ENCODE measurements at regions of chr20 and their contacts with region 1.

Region 1: GRCh38 chr20:36481381-36482043 is 59.8 kb upstream of the MYL9 start:
- DNase-seq: no peak
- ATAC-seq: no peak
- H3K4me3 ChIP-seq: no peak overlapping the region
- H3K27ac ChIP-seq: no peak overlapping the region
- H3K4me1 ChIP-seq: peaks cover 12% of the 10 kb centered on the region
- H3K27me3 ChIP-seq: no peaks in the 10 kb centered on the region
- CTCF ChIP-seq: no peak
- EP300 ChIP-seq: no peak
- POLR2A ChIP-seq: no peak
- RAD21 ChIP-seq: no peak

Region 2: GRCh38 chr20:36493013-36493800 is 11.7 kb after region 1 on chr20:
- CTCF ChIA-PET with region 1: interaction called, 10 read pairs
- POLR2A ChIA-PET with region 1: interaction called, 6 read pairs
- RAD21 ChIA-PET with region 1: no interaction called
- SMC1A ChIA-PET with region 1: interaction called, 4 read pairs
- in situ Hi-C with region 1: no loop called
- intact Hi-C with region 1: no loop called
- DNase-seq: no peak
- ATAC-seq: peak; percentile 42
- H3K4me3 ChIP-seq: no peak overlapping the region
- H3K27ac ChIP-seq: peak overlapping the region; percentile 59; the same call in 1 of the 2 replicates
- H3K4me1 ChIP-seq: peaks cover 21% of the 10 kb centered on the region
- H3K27me3 ChIP-seq: no peaks in the 10 kb centered on the region
- CTCF ChIP-seq: peak; percentile 21 to 51 (median 48); a peak in 4 of 6 replicates
- EP300 ChIP-seq: no peak
- POLR2A ChIP-seq: no peak
- RAD21 ChIP-seq: peak; percentile 52

Region 3: DNA sequence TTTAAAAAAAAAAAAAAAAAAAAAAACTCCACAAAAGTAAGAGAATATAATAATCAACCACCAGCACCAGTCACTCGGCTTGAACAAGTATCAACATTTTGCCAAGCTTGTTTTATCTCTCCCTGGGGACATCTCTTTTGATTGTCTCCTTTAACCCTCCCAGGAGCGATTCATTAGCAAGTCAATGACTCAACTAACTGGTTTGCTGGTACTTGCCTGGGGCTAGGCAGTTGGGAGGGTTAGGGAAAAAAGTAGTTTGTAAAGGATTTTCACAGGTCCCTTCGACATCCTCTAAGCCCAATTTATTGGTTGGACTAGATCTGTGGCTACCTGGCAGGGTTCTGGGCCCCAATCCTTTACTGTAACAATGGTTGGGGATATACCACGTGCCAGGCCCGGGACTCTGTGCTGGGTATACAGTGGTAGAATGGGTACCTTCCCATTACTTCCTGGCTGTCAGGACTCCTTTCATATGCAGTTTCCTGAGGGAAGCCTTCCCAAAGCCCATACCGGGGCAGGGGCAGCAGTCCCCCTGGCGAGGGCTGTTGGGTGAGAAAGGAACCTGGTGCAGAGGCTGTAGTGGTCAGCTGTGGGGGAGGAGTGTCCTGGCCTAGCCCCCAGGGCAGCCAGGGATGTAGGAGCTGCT is 104.1 kb after region 1 on chr20:
- CTCF ChIA-PET with region 1: no interaction called
- POLR2A ChIA-PET with region 1: interaction called, 10 read pairs
- RAD21 ChIA-PET with region 1: no interaction called
- SMC1A ChIA-PET with region 1: no interaction called
- in situ Hi-C with region 1: no loop called
- intact Hi-C with region 1: no loop called
- DNase-seq: no peak
- ATAC-seq: no peak
- H3K4me3 ChIP-seq: no peak overlapping the region
- H3K27ac ChIP-seq: no peak overlapping the region
- H3K4me1 ChIP-seq: peaks cover 5% of the 10 kb centered on the region
- H3K27me3 ChIP-seq: no peaks in the 10 kb centered on the region
- CTCF ChIP-seq: no peak
- EP300 ChIP-seq: no peak
- POLR2A ChIP-seq: no peak; the same call in 1 of the 2 replicates
- RAD21 ChIP-seq: no peak

Measured in GM12878 (cell line).